Activated B cell treated with CpG ODN at 0.5 μM for 24 hours (primary cell): ENCODE measurements at regions of chr19 and their contacts with region 1.

Region 1: DNA sequence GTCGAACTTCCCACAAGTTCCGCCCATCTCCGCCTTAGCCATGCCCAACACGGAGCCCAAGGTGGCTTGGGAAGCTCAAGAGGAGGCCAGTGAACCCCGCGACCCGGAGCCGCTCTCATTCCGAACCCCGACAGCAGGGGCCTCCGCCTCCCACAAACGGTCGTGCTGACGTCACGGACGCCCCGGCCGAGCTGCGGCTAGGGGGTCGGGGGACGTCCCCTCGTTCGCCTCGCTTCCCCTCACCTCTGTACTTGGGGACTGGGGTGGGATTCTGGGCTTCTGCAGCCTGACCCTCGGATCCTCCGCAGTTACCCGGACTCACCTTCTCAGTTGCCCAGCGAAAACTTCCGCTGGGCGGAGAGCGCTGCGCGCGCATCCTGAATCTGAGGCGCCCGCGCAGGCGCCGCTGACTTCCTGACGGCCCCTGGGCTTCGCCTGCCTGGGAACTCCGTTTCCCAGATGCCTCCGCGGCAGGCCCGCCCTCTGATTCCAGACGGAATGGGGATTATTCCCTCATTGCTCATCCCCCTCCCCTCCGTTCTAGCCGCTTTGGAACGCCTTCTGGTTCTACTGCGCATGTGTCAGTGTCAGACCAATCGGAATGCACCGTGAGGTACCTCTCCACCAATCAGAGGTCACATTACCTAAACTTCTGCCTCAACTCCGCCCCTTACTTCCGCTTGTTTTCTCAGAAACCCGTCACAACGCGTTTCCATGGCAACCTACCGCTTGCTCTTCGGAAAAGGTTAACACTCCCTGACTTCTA is at the start of gene VRK3:
- DNase-seq: peak; percentile 95
- ATAC-seq: peak; percentile 87
- H3K4me3 Mint-ChIP-seq: peak within 1 kb of the TSS; percentile 97
- H3K27ac Mint-ChIP-seq: peak within 1 kb of the TSS; percentile 100
- H3K4me1 Mint-ChIP-seq: peaks cover 46% of the 10 kb centered on the region
- H3K27me3 Mint-ChIP-seq: no peaks in the 10 kb centered on the region
- CTCF ChIP-seq: no peak
- total RNA-seq, gene VRK3: 71.1 and 82.6 TPM in 2 replicates

Region 2: DNA sequence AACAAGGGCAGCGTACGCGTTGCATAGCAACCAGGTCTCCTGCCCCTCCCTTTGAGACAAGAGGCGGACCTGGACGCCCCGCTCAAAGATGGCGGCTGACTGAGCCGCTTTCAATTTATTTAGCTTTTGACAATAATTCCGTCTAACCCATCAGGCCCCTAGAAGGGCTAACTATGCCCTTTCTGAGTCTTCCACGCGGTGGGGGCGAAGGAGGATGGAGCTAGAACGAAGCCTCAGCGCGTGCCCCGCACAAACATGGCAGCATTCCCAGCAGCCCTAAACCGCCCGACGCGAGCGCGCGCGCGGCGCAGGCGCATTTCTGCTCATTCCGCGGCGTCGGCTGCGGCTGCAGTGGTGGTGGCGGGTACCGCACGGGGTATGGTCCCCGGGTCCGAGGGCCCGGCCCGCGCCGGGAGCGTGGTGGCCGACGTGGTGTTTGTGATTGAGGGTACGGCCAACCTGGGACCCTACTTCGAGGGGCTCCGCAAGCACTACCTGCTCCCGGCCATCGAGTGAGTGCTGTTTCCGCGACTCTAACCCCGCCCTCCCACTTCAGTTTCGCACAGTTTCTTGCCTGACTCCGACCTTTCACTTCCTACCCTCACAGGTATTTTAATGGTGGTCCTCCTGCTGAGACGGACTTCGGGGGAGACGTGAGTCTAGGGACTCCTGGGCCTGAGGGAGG is 207.1 kb before region 1 on chr19 and contains the start of gene MED25:
- CTCF ChIA-PET with region 1: no interaction called
- POLR2A ChIA-PET with region 1: no interaction called
- intact Hi-C with region 1: loop called (anchors 1 kb)
- DNase-seq: peak; percentile 91
- ATAC-seq: peak; percentile 59
- H3K4me3 Mint-ChIP-seq: peak within 1 kb of the TSS; percentile 98
- H3K27ac Mint-ChIP-seq: peak within 1 kb of the TSS; percentile 99
- H3K4me1 Mint-ChIP-seq: peaks cover 40% of the 10 kb centered on the region
- H3K27me3 Mint-ChIP-seq: no peaks in the 10 kb centered on the region
- CTCF ChIP-seq: no peak
- total RNA-seq, gene MED25: 70.1 and 88.8 TPM in 2 replicates

Region 3: GRCh38 chr19:49850473-49851342 is 174.5 kb before region 1 on chr19 and contains the start of gene PTOV1:
- CTCF ChIA-PET with region 1: no interaction called
- POLR2A ChIA-PET with region 1: no interaction called
- intact Hi-C with region 1: no loop called
- DNase-seq: peak; percentile 96
- ATAC-seq: peak; percentile 84
- H3K4me3 Mint-ChIP-seq: peak within 1 kb of the TSS; percentile 92
- H3K27ac Mint-ChIP-seq: peak within 1 kb of the TSS; percentile 95
- H3K4me1 Mint-ChIP-seq: peaks cover 56% of the 10 kb centered on the region
- H3K27me3 Mint-ChIP-seq: no peaks in the 10 kb centered on the region
- CTCF ChIP-seq: no peak
- total RNA-seq, gene PTOV1: 103 and 107 TPM in 2 replicates

Region 4: DNA sequence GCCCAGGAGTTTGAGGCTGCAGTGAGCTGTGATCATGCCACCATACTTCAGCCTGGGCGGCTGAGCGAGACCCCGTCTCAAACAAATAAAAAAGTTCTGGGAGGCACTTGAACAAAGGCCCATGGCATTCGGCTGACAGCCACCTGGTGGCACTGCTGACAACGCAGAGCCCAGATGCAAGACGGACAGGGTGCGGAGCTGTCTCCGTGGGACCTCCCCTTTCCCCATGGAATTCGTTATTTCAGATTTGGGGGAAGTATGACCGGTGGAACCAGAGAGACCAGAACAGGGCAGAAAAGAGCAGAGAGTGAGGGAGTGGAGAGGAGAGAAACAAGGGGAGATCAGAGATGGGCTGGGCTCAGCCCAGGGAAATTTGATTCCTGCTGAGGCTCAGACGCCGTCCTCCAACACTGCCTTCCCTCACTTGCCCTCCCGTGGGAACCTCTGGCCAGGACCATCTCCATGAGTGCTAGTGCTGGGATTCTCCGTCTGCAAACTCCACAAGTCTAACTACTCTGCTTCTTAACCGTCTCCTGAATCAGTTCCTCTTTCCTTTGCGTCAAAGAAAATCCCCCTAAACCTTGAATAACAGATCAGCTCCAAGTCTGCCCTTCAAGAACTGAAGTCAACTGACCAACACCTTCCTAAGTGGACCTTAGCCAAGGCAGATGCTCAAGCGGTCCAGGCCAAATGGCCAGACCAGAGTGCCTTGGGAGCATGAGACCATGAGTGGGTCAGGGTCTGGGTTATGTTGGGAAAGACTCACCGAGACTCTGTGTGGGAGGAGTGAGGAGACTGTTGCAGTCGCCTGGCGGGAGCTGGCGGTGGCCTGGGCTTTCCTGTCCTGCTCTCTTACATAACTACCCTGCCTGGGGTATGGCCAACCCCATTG is 108.1 kb before region 1 on chr19:
- CTCF ChIA-PET with region 1: no interaction called
- POLR2A ChIA-PET with region 1: no interaction called
- intact Hi-C with region 1: no loop called
- DNase-seq: peak; percentile 41
- ATAC-seq: peak; percentile 74
- H3K4me3 Mint-ChIP-seq: peak overlapping the region; percentile 77
- H3K27ac Mint-ChIP-seq: peak overlapping the region; percentile 94
- H3K4me1 Mint-ChIP-seq: peaks cover 77% of the 10 kb centered on the region
- H3K27me3 Mint-ChIP-seq: no peaks in the 10 kb centered on the region
- CTCF ChIP-seq: no peak

Region 5: DNA sequence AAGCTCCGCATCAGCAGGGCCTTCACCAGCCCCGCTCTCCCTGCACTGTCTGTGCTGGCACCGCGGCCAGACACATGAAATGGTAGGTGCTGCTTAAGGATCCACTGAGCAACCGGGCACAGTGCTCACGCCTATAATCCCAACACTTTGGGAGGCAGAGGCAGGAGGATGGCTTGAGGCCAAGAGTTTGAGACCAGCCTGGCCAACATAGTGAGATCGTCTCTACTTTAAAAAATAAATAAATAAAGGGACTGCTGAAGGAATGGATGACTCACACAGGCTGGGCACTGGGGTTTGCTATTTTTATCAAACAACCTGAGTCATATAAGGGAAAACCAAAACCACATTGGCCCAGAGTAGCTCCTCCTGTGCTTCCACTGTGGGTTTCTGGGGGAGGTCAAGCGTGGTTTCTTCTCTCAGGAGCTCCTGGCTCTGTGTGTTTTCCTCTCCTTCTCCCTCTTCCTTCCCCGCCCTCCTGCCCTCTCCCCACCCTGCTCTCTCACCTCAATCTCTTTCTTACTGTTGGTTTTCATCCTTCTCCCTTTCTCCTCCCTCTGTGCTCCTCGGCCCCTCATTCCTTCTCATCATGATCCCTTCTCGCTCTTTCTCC is 21.3 kb before region 1 on chr19:
- CTCF ChIA-PET with region 1: no interaction called
- POLR2A ChIA-PET with region 1: no interaction called
- intact Hi-C with region 1: no loop called
- DNase-seq: no peak
- ATAC-seq: peak; percentile 50
- H3K4me3 Mint-ChIP-seq: no peak overlapping the region
- H3K27ac Mint-ChIP-seq: no peak overlapping the region
- H3K4me1 Mint-ChIP-seq: peaks cover 3% of the 10 kb centered on the region
- H3K27me3 Mint-ChIP-seq: no peaks in the 10 kb centered on the region
- CTCF ChIP-seq: no peak

Region 6: DNA sequence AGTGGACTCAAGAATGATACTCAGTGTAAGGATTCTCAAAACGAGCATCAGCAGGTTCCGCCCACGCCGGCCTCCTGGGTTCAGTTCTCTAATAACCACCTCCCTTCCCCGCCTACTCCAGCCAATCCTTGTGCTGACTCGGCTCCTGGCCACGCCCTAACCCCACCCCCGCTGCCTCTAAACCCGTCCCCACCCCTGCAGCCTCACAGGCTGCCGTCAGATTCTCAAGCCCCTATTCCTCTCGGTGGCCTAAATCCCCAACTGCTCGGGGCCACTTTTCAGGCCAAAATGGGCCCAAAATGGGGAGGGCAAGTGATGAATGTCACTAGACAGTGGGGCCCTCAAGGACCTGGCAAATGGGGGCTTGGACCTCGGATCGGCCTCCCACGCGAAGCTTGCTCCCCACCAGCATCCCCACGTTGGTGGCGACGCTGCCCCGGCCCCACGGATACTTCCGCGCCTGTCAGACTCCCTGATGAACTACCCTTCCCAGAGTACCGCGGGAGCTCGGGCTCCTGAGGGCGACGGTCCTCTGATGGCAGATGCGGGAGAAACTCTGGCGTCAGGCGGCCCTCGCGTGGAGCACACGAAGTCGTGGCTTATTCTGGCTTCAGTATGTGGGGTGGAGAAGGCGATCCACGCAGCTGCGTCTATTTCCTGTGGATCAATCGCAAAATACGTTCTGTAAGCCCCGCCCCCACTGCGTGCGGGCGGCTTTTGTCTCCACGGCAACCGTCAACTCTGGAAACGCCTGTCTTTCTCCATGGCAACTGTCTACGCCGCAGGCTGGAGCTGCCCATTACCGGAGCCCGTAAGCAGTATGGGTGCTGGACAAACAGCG is 25.4 kb after region 1 on chr19:
- CTCF ChIA-PET with region 1: interaction called, 5 read pairs
- POLR2A ChIA-PET with region 1: no interaction called
- intact Hi-C with region 1: loop called (anchors 2 kb)
- DNase-seq: peak; percentile 71
- ATAC-seq: peak; percentile 93
- H3K4me3 Mint-ChIP-seq: peak overlapping the region; percentile 89
- H3K27ac Mint-ChIP-seq: peak overlapping the region; percentile 76
- H3K4me1 Mint-ChIP-seq: peaks cover 17% of the 10 kb centered on the region
- H3K27me3 Mint-ChIP-seq: peaks cover 4% of the 10 kb centered on the region
- CTCF ChIP-seq: no peak

Region 7: GRCh38 chr19:50242581-50242980 is 217.4 kb after region 1 on chr19:
- CTCF ChIA-PET with region 1: no interaction called
- POLR2A ChIA-PET with region 1: no interaction called
- intact Hi-C with region 1: no loop called
- DNase-seq: no peak
- ATAC-seq: peak; percentile 37
- H3K4me3 Mint-ChIP-seq: no peak overlapping the region
- H3K27ac Mint-ChIP-seq: no peak overlapping the region
- H3K4me1 Mint-ChIP-seq: no peaks in the 10 kb centered on the region
- H3K27me3 Mint-ChIP-seq: peaks cover 20% of the 10 kb centered on the region
- CTCF ChIP-seq: no peak